ENCODE measurements at regions of chr22 and their contacts with region 1.

Region 1: GRCh38 chr22:43230971-43231723 is 44.2 kb upstream of the TTLL12 start:
- DNase-seq: peak; percentile 78 to 80
- H3K4me3 ChIP-seq: no peak overlapping the region
- H3K4me3 Mint-ChIP-seq: no peak overlapping the region
- H3K27ac Mint-ChIP-seq: peak overlapping the region; percentile 29
- H3K4me1 ChIP-seq: 0 out of 2 replicates have a peak, but pooled peaks cover 8% of the 10 kb centered on the region
- H3K4me1 Mint-ChIP-seq: peaks cover 6% of the 10 kb centered on the region
- H3K27me3 ChIP-seq: no peaks in the 10 kb centered on the region
- H3K27me3 Mint-ChIP-seq: peaks cover 8% of the 10 kb centered on the region
- CTCF ChIP-seq: peak; percentile 86 to 92

Region 2: GRCh38 chr22:43187171-43188099 is 43.7 kb before region 1 on chr22:
- CTCF ChIA-PET with region 1: interaction called, 8 read pairs
- POLR2A ChIA-PET with region 1: interaction called, 4 read pairs
- intact Hi-C with region 1: loop called (anchors 5 kb)
- DNase-seq: peak; percentile 95 to 98
- H3K4me3 ChIP-seq: peak overlapping the region; percentile 42
- H3K4me3 Mint-ChIP-seq: peak overlapping the region; percentile 83
- H3K27ac Mint-ChIP-seq: peak overlapping the region; percentile 93
- H3K4me1 ChIP-seq: peaks cover 16% of the 10 kb centered on the region; the same call in 1 of the 2 replicates
- H3K4me1 Mint-ChIP-seq: peaks cover 23% of the 10 kb centered on the region
- H3K27me3 ChIP-seq: no peaks in the 10 kb centered on the region
- H3K27me3 Mint-ChIP-seq: no peaks in the 10 kb centered on the region
- CTCF ChIP-seq: peak; percentile 52 to 59

Region 3: DNA sequence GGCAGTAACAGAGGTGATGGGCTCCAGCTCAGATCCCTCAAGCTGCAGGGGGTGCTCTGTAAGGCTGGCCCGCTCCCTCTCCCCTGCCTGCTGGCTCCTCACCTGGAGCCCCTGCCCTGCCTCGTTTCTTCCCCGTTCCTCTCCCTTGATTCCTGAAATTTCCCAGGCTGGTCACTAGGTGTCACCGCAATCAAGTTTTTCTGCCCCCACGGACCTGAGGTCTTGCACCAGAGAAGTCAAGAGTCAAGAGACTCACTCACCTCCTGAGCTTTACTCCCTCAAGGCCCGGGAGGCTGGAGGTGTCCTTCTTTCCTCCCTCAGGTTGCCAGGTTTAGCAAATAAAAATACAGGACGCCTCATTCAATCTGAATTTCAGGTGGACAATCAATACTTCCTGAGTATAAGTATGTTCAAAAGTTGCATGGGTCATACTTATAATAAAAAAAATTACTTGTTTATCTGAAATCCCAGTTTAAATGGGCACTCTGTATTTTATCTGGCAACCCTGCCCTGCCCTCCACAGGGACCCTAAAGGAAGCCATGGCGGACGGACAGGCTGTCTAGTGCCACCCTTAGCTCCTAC is 42.8 kb after region 1 on chr22:
- CTCF ChIA-PET with region 1: interaction called, 23 read pairs
- POLR2A ChIA-PET with region 1: no interaction called
- intact Hi-C with region 1: loop called (anchors 1 kb)
- DNase-seq: peak; percentile 67 to 77
- H3K4me3 ChIP-seq: no peak overlapping the region
- H3K4me3 Mint-ChIP-seq: no peak overlapping the region
- H3K27ac Mint-ChIP-seq: no peak overlapping the region
- H3K4me1 ChIP-seq: no peaks in the 10 kb centered on the region
- H3K4me1 Mint-ChIP-seq: no peaks in the 10 kb centered on the region
- H3K27me3 ChIP-seq: no peaks in the 10 kb centered on the region; the same call in 1 of the 2 replicates
- H3K27me3 Mint-ChIP-seq: peaks cover 4% of the 10 kb centered on the region
- CTCF ChIP-seq: peak; percentile 77 to 78

Region 4: GRCh38 chr22:43346521-43346929 is 115.4 kb after region 1 on chr22:
- CTCF ChIA-PET with region 1: interaction called, 37 read pairs
- POLR2A ChIA-PET with region 1: no interaction called
- intact Hi-C with region 1: loop called (anchors 1 kb)
- DNase-seq: peak; percentile 58 to 76
- H3K4me3 ChIP-seq: no peak overlapping the region
- H3K4me3 Mint-ChIP-seq: no peak overlapping the region
- H3K27ac Mint-ChIP-seq: no peak overlapping the region
- H3K4me1 ChIP-seq: no peaks in the 10 kb centered on the region
- H3K4me1 Mint-ChIP-seq: peaks cover 12% of the 10 kb centered on the region
- H3K27me3 ChIP-seq: peaks cover 3% of the 10 kb centered on the region; the same call in 1 of the 2 replicates
- H3K27me3 Mint-ChIP-seq: peaks cover 23% of the 10 kb centered on the region
- CTCF ChIP-seq: peak; percentile 73 to 79

Region 5: DNA sequence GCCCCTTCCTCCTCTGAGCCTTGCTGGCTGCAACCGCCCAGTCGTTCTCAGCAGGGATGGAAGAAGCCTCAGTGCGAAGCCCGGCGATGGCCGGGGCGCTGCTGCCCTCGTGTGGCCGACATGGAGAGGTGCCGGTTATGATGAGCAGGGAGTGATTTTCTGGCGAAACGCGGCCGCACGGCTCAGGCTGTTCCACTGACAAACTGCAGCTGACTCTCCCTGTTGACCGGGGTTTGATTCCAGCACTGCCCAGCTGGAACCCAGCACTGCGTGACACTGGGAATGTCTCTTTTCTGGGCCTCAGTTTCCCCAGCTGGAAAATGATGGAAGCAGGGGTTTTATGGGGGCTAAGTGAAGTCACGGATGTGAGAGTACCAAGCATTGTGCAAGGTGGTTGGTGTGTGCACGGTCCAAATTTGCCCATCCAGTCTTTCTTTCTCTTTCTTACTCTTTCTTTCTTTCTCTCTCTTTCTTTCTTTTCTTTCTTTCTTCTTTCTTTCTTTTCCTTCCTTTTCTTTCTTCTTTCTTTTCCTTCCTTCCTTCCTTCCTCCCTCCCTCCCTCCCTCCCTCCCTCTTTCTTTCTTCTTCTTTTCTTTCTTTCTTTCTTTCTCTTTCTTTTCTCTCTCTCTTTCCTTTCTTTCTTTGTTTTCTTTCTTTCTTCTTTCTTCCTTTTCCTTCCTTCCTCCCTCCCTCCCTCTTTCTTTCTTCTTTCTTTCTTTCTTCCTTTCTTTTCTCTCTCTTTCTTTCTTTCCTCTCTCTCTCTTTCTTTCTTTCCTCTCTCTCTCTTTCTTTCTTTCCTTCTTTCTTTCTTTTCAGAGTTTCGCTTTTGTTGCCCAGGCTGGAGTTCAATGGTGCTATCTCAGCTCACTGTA is 154.9 kb after region 1 on chr22:
- CTCF ChIA-PET with region 1: interaction called, 13 read pairs
- POLR2A ChIA-PET with region 1: no interaction called
- intact Hi-C with region 1: loop called (anchors 1 kb)
- DNase-seq: peak; percentile 67 to 79
- H3K4me3 ChIP-seq: no peak overlapping the region
- H3K4me3 Mint-ChIP-seq: no peak overlapping the region
- H3K27ac Mint-ChIP-seq: no peak overlapping the region
- H3K4me1 ChIP-seq: 0 out of 2 replicates have a peak, but pooled peaks cover 4% of the 10 kb centered on the region
- H3K4me1 Mint-ChIP-seq: no peaks in the 10 kb centered on the region
- H3K27me3 ChIP-seq: no peaks in the 10 kb centered on the region
- H3K27me3 Mint-ChIP-seq: peaks cover 22% of the 10 kb centered on the region
- CTCF ChIP-seq: peak; percentile 92 to 94

Measured in Caco-2 (cell line).